ENCODE measurements at regions of chr16 and their contacts with region 1.

Region 1: DNA sequence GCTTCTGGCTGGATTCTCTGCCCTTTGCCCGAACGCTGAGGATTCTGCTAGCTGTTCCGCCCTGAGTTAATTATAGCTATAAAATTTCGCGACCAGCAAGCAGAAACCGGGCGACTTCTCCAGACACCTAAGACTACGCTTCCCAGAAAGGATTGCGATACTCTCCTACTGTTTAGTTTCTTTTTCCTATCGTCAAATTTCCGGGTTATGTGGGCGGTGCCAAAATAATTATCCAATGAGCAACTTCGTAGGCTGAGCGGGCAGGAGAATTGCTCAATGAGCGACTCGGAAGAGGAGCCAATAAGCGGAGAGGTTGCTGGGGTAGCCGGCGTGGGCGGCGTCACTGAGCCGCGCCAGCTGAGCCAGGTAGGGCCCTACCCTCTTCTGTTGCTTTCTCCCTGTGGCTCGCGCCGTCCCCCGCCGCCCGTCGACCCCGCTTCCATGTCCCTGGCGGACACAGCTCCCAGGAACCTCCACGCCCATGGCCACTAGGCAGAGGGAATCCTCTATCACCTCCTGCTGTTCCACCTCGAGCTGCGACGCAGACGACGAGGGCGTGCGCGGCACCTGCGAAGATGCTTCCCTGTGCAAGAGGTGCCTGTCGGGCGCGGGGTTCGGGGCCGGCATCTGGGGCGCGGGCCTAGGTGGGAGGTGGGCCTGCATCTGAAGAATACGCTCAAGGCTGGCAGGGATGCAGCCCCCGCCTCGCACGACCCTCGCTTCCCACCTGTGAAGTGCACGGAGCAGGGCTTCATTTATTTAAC is at the start of gene LCMT1:
- DNase-seq: peak; percentile 99
- H3K4me3 ChIP-seq: peak within 1 kb of the TSS; percentile 71 to 93 (median 84)
- H3K27ac ChIP-seq: peak within 1 kb of the TSS; percentile 73
- H3K4me1 ChIP-seq: peaks cover 26% of the 10 kb centered on the region
- H3K27me3 ChIP-seq: no peaks in the 10 kb centered on the region
- CTCF ChIP-seq: no peak
- POLR2A ChIP-seq: peak; percentile 37
- total RNA-seq, gene LCMT1: 36.2 and 36.8 TPM in 2 replicates

Region 2: DNA sequence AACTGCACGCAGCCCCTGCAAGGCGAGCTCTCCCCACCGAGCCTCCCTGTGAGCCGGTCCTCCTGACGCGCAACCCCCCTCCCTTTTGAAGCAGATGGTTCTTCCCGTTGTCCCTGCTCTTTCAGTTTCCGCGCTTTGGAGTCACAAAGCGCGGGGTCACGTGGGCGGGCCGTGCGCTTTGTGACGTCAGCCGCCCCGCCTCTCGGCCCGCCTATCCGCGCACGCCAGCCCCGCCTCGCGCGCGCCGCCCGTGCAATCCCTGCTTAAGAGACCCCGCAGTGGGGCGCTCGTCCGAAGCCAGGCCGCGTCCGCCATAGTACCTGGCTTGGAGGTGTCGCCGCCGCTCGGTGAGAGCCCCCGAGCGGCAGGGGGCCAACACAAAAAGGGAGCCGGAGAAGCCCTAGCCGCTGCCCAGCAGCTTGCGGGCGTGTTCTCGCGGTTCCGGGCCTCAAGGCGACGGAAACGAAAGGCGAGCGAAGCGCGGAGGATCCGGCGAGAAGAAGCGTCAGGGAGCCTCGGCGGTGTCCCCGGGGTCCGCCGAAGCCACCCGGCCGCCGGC is 572.2 kb before region 1 on chr16 and contains the start of gene RBBP6:
- CTCF ChIA-PET with region 1: no interaction called
- POLR2A ChIA-PET with region 1: no interaction called
- dilution Hi-C with region 1: no loop called
- intact Hi-C with region 1: loop called (anchors 2 kb)
- DNase-seq: peak; percentile 98
- H3K4me3 ChIP-seq: peak within 1 kb of the TSS; percentile 80 to 94 (median 88)
- H3K27ac ChIP-seq: peak within 1 kb of the TSS; percentile 96
- H3K4me1 ChIP-seq: peaks cover 36% of the 10 kb centered on the region
- H3K27me3 ChIP-seq: no peaks in the 10 kb centered on the region
- CTCF ChIP-seq: peak in 1 of 2 donors; percentile 28
- POLR2A ChIP-seq: peak; percentile 93
- total RNA-seq, gene RBBP6: 49.2 and 52.1 TPM in 2 replicates

Region 3: DNA sequence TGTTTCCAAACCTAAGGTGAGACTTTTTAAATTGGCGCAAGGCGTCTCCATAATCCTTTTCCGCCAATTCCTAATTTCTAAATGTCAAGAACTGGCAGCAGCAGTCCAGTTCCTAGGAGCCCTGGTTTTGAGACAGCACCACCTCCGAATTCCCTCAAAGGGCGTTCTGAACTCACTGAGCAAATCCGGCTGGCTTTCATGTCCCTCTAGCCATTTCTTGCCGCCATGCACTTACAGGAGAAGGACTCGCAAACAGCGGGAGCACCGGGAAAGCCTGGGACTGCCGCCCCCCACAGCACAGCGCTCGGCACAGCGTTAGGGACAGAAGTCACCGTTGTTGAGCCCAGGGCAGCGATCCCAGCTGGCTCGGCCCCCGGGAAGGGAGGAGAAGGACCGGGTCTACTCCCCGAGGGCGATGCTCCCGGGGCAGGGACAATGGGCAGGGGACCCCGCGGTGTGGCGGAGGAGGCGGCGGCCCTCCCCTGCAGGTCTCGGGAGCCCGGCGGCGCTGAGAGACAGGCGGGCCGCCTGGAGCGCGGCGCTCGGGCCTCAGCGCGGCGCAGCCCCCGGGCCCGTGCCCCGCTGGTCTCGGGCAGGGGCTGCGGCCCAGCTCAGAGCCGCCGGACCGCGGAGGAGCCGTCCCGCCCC is 97.0 kb before region 1 on chr16:
- CTCF ChIA-PET with region 1: no interaction called
- POLR2A ChIA-PET with region 1: no interaction called
- dilution Hi-C with region 1: no loop called
- intact Hi-C with region 1: loop called (anchors 1 kb)
- DNase-seq: peak; percentile 59
- H3K4me3 ChIP-seq: peak overlapping the region; percentile 75 to 99 (median 97)
- H3K27ac ChIP-seq: peak overlapping the region; percentile 56
- H3K4me1 ChIP-seq: peaks cover 35% of the 10 kb centered on the region
- H3K27me3 ChIP-seq: no peaks in the 10 kb centered on the region
- CTCF ChIP-seq: no peak
- POLR2A ChIP-seq: peak; percentile 2

Region 4: DNA sequence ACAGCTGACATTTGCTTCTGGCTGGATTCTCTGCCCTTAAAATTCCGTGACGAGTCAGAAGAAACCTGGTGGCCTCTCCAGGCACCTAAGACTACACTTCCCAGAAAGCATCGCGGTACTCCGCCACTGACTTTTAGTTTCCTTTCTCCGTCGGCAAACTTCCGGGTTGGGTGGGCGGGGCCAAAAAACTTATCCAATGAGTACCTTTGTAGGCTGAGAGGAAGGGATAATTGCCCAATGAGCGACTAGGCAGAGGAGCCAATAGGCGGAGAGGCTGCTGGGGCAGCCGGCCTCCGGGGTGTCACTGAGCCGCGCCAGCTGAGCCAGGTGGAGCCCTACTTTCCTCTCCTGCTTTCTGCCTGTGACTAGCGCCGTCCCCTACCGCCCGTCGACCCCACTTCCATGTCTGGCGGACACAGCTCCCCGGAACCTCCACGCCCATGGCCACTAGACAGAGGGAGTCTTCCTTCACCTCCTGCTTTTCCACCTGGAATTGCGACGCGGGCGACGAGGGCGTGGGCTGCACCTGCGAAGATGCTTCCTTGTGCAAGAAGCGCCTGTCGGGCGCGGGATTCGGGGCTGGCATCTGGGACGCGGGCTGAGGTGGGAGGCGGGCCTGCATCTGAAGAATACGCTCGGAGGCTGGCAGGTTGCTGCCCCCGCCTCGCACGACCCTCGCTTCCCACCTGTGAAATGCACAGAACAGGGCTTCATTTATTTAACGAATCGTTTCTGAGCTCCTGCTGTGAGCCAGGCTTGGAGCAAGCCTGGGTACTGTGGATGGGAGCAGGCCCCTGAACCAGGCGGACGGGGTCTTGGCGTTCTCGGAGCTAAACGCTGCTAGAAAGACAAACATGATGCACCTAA is 79.9 kb before region 1 on chr16:
- CTCF ChIA-PET with region 1: no interaction called
- POLR2A ChIA-PET with region 1: no interaction called
- dilution Hi-C with region 1: no loop called
- intact Hi-C with region 1: loop called (anchors 1 kb)
- DNase-seq: peak; percentile 96
- H3K4me3 ChIP-seq: peak overlapping the region; percentile 85 to 97 (median 93)
- H3K27ac ChIP-seq: peak overlapping the region; percentile 35
- H3K4me1 ChIP-seq: peaks cover 6% of the 10 kb centered on the region
- H3K27me3 ChIP-seq: no peaks in the 10 kb centered on the region
- CTCF ChIP-seq: no peak
- POLR2A ChIP-seq: peak; percentile 72

Region 5: GRCh38 chr16:25045696-25046381 is 65.7 kb before region 1 on chr16:
- CTCF ChIA-PET with region 1: interaction called, 4 read pairs
- POLR2A ChIA-PET with region 1: no interaction called
- dilution Hi-C with region 1: no loop called
- intact Hi-C with region 1: loop called (anchors 2 kb)
- DNase-seq: peak; percentile 34
- H3K4me3 ChIP-seq: no peak overlapping the region
- H3K27ac ChIP-seq: no peak overlapping the region
- H3K4me1 ChIP-seq: peaks cover 27% of the 10 kb centered on the region
- H3K27me3 ChIP-seq: no peaks in the 10 kb centered on the region
- CTCF ChIP-seq: no peak
- POLR2A ChIP-seq: no peak

Region 6: GRCh38 chr16:25066747-25067631 is 44.6 kb before region 1 on chr16:
- CTCF ChIA-PET with region 1: no interaction called
- POLR2A ChIA-PET with region 1: no interaction called
- dilution Hi-C with region 1: no loop called
- intact Hi-C with region 1: loop called (anchors 2 kb)
- DNase-seq: peak; percentile 73
- H3K4me3 ChIP-seq: peak overlapping the region; percentile 58 to 90 (median 71)
- H3K27ac ChIP-seq: no peak overlapping the region
- H3K4me1 ChIP-seq: peaks cover 6% of the 10 kb centered on the region
- H3K27me3 ChIP-seq: peaks cover 3 to 4% of the 10 kb centered on the region in 2 experiments
- CTCF ChIP-seq: no peak
- POLR2A ChIP-seq: peak; percentile 44

Region 7: DNA sequence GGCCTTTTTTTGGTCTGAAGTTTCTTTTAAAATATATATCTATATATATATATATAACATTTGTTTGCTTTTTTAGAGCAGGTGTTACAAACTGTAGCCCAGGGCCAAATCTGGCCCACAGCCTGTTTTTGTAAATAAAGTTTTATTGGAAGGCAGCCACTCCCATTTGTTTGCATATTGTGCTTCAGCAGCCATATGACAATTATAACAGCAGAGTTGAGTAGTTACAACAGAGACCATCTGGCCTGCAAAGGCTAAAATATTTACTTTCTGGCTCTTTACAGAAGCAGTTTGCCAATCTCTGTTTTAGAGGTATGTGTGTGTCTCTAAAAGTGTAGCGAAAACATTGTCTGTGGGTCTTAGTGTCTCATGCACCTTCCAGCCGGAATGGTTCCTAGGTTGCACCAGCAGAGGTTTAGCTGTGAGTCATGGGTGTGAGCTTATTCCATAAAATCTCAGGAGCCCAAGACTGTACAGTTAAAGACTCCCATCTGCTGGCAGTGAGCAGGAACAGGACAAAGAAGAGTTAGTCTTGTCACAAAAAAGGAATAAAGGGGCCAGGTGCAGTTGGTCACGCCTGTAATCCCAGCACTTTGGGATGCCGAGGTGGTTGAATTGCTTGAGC is 23.8 kb after region 1 on chr16:
- CTCF ChIA-PET with region 1: no interaction called
- POLR2A ChIA-PET with region 1: no interaction called
- dilution Hi-C with region 1: no loop called
- intact Hi-C with region 1: no loop called
- DNase-seq: no peak
- H3K4me3 ChIP-seq: no peak overlapping the region
- H3K27ac ChIP-seq: no peak overlapping the region
- H3K4me1 ChIP-seq: peaks cover 3% of the 10 kb centered on the region
- H3K27me3 ChIP-seq: no peaks in the 10 kb centered on the region
- CTCF ChIP-seq: no peak
- POLR2A ChIP-seq: no peak